Endothelial cell of umbilical vein (primary cell): ENCODE measurements at regions of chr12 and their contacts with region 1.

Region 1: GRCh38 chr12:69688496-69689427 is 10.3 kb downstream of the BEST3 start:
- DNase-seq: peak; percentile 96
- H3K4me3 ChIP-seq: no peak overlapping the region
- H3K27ac ChIP-seq: peak overlapping the region; percentile 81
- H3K4me1 ChIP-seq: peaks cover 28% of the 10 kb centered on the region
- H3K27me3 ChIP-seq: no peaks in the 10 kb centered on the region
- CTCF ChIP-seq: no peak
- POLR2A ChIP-seq: peak; percentile 32

Region 2: DNA sequence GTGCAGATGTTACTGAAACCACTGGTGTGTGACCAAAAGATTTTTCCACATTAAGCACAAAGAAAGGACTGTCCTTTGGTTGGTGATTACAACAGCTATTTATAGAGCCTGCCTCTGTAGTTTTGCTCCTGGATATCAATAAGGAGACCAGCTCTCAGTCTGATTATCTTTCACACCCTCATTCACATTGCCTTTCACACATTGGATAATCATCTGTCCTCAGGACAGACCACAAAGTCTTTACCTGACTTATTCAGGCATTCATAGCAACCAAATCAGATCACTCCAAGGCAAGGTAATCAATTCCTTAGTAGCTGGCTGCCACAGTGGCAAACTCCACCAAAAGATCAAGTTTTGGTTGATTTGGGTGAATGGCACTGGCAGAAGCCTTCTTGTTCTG is 509.0 kb before region 1 on chr12:
- CTCF ChIA-PET with region 1: no interaction called
- POLR2A ChIA-PET with region 1: no interaction called
- dilution Hi-C with region 1: no loop called
- intact Hi-C with region 1: no loop called
- DNase-seq: no peak
- H3K4me3 ChIP-seq: no peak overlapping the region
- H3K27ac ChIP-seq: no peak overlapping the region
- H3K4me1 ChIP-seq: no peaks in the 10 kb centered on the region
- H3K27me3 ChIP-seq: peaks cover 1 to 4% of the 10 kb centered on the region in 2 experiments
- CTCF ChIP-seq: no peak
- POLR2A ChIP-seq: no peak

Region 3: GRCh38 chr12:69821456-69822159 is 132.8 kb after region 1 on chr12:
- CTCF ChIA-PET with region 1: no interaction called
- POLR2A ChIA-PET with region 1: no interaction called
- dilution Hi-C with region 1: no loop called
- intact Hi-C with region 1: loop called (anchors 5 kb)
- DNase-seq: peak; percentile 91
- H3K4me3 ChIP-seq: no peak overlapping the region
- H3K27ac ChIP-seq: no peak overlapping the region
- H3K4me1 ChIP-seq: peaks cover 17% of the 10 kb centered on the region
- H3K27me3 ChIP-seq: no peaks in the 10 kb centered on the region
- CTCF ChIP-seq: no peak
- POLR2A ChIP-seq: no peak